T-cell (primary cell): ENCODE measurements at regions of chr16 and their contacts with region 1.

Region 1: DNA sequence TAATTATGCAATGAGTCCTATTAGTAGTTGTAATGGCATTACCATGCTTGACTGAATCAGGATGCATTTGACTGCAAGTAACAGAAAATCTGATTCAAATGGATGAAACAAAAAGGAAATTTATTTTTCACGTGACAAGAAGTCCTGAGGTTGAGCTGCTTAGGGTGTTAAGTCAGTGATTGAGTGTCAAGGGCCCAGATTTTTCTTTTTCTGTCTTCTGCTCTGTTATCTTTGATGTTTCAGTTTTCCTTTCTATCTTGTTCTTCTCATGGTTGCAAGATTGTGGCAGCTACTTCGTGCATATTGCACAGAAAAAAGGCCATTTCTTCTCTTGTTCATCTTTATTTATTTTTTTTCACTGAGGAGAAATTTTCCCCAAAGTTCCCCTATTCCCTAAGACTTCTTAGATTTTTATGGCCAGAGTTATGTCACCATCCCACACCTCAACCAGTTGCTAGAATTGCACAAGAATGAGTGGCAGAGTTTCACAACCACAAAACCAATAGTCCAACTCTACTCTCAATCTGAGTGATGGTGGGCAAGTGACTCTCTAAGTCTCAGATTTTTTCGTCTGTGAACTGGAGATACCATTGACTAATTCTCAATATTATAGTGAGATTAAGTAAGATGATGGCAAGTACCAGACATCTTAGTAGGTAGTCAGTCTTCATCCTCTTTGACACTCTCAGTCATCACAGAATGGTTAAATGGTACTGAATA is 15.7 kb upstream of the GPR139 start:
- DNase-seq: no peak
- ATAC-seq: no peak
- H3K4me3 ChIP-seq: no peak overlapping the region
- H3K4me3 Mint-ChIP-seq: no peak overlapping the region
- H3K27ac ChIP-seq: no peak overlapping the region
- H3K27ac Mint-ChIP-seq: no peak overlapping the region
- H3K4me1 ChIP-seq: no peaks in the 10 kb centered on the region
- H3K4me1 Mint-ChIP-seq: no peaks in the 10 kb centered on the region
- H3K27me3 ChIP-seq: no peaks in the 10 kb centered on the region
- H3K27me3 Mint-ChIP-seq: peaks cover 2 to 9% of the 10 kb centered on the region in 2 donors

Region 2: DNA sequence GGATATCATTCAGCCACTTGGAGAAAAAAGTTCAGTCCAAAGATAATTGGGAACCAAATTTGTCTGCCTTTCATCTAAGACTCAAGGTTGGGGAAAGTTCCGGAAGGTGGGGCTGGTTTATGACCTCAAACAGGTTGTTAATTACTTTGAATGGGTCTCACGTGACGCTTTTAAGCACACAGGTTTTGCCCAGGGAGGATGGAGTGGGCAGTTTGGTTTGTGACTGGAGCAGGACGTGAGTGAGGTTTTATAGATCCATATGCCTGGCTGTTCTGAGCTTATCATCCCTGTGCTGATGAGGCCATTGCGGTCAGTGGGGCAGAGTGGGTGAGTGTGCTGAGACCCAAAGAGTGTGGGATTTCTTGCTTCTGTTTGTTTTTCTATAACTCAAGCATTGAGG is 166.0 kb before region 1 on chr16:
- CTCF ChIA-PET with region 1: no interaction called
- POLR2A ChIA-PET with region 1: no interaction called
- DNase-seq: no peak
- ATAC-seq: no peak
- H3K4me3 ChIP-seq: no peak overlapping the region
- H3K4me3 Mint-ChIP-seq: no peak overlapping the region
- H3K27ac ChIP-seq: no peak overlapping the region
- H3K27ac Mint-ChIP-seq: no peak overlapping the region
- H3K4me1 ChIP-seq: no peaks in the 10 kb centered on the region
- H3K4me1 Mint-ChIP-seq: no peaks in the 10 kb centered on the region
- H3K27me3 ChIP-seq: no peaks in the 10 kb centered on the region
- H3K27me3 Mint-ChIP-seq: peaks cover 10% of the 10 kb centered on the region in 2 donors

Region 3: GRCh38 chr16:20122011-20122410 is 32.6 kb after region 1 on chr16:
- CTCF ChIA-PET with region 1: interaction called in 1 of 2 experiments, 10 read pairs
- POLR2A ChIA-PET with region 1: no interaction called
- DNase-seq: no peak
- ATAC-seq: no peak
- H3K4me3 ChIP-seq: no peak overlapping the region
- H3K4me3 Mint-ChIP-seq: no peak overlapping the region
- H3K27ac ChIP-seq: no peak overlapping the region
- H3K27ac Mint-ChIP-seq: no peak overlapping the region
- H3K4me1 ChIP-seq: no peaks in the 10 kb centered on the region
- H3K4me1 Mint-ChIP-seq: no peaks in the 10 kb centered on the region
- H3K27me3 ChIP-seq: peaks cover 0 to 2% of the 10 kb centered on the region in 2 experiments
- H3K27me3 Mint-ChIP-seq: peaks cover 3 to 12% of the 10 kb centered on the region in 2 donors

Region 4: DNA sequence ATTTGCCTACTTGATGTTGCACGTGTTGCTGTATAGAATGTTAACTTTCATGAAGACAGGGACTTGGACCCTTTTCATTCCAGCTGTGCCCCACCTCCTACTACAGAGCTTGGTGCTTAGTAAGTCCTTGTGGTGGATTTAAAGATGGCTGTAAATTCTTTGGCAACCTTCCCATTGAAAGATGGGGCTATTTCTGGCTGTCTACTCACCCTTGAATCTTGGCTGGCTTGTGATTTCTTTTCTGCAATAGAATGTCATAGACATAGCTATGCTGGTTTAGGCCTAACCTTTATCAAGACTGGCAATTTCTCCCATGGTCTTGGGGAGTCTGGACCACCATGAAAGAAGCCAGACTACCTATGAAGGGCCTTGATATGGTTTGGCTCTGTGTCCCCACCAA is 420.9 kb after region 1 on chr16:
- CTCF ChIA-PET with region 1: no interaction called
- POLR2A ChIA-PET with region 1: no interaction called
- DNase-seq: no peak
- ATAC-seq: no peak
- H3K4me3 ChIP-seq: no peak overlapping the region
- H3K4me3 Mint-ChIP-seq: no peak overlapping the region
- H3K27ac ChIP-seq: no peak overlapping the region
- H3K27ac Mint-ChIP-seq: no peak overlapping the region
- H3K4me1 ChIP-seq: no peaks in the 10 kb centered on the region
- H3K4me1 Mint-ChIP-seq: no peaks in the 10 kb centered on the region
- H3K27me3 ChIP-seq: no peaks in the 10 kb centered on the region
- H3K27me3 Mint-ChIP-seq: peaks cover 7 to 8% of the 10 kb centered on the region in 2 donors